Left colon (tissue), 2 donors: ENCODE measurements at regions of chr1 and their contacts with region 1.

Region 1: GRCh38 chr1:56831871-56832693 is 12.9 kb upstream of the FYB2 start:
- DNase-seq: peak in 1 of 2 donors; percentile 46
- ATAC-seq: peak; percentile 71

Region 2: DNA sequence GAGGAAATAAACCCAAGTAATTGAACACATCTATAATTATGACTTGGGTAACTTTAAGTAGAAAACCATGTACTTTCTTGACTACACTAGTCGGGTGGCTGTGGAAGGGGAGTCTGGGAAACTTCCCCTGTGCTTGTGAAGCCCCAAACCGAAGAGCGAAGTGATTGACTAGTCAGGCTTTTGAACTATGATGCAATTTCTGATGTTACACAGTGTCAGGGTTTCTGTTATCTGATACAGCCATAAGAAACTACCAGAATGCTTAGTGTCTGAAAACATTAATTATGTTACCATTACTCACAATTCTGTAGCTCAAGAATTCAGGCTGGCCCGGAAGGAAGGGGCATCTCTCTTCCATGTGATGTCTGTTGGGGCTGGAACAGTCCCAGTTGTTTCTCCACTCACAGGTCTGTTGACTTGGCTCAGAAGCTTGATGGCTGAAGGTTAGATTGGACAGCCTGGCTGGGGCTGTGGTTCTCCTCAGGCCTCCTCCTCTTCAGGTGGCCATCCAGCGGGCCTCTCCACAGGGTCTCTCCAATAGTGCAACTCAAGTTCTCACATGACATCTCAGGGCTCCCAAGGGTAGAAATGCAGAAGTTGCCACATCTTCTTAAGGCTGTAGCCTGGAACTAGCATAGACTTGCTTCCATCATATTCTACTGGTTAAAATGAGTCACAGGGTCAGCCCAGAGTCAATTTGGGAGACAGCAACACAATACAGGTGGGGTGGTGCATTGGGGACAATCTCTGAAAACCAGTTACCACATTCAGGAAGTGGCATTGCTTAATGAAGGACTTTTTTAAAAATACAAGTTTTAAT is 142.1 kb after region 1 on chr1:
- intact Hi-C with region 1: no loop called
- DNase-seq: no peak
- ATAC-seq: no peak

Region 3: DNA sequence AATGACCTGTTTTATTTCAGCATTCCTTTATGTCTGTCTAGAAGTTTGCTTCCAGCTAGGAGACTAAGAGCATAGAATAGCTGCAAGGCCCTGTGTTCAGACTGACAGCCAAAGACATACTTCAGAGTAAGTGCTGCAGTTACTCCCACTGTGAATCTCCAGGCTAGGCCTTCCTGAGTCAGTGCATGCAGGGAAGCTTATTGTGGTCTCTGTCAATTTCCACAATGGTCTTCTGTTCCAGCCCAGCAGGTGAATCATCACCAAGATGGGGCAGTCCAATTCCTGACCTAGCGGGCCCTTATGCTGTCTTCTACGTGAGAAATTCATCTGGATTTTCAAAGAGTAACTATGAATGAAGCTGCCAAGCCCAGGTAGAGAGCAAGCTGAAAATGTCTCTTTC is 280.1 kb after region 1 on chr1:
- intact Hi-C with region 1: no loop called
- DNase-seq: no peak
- ATAC-seq: no peak

Region 4: GRCh38 chr1:57494530-57495079 is 662.5 kb after region 1 on chr1:
- intact Hi-C with region 1: no loop called
- DNase-seq: no peak
- ATAC-seq: no peak

Region 5: DNA sequence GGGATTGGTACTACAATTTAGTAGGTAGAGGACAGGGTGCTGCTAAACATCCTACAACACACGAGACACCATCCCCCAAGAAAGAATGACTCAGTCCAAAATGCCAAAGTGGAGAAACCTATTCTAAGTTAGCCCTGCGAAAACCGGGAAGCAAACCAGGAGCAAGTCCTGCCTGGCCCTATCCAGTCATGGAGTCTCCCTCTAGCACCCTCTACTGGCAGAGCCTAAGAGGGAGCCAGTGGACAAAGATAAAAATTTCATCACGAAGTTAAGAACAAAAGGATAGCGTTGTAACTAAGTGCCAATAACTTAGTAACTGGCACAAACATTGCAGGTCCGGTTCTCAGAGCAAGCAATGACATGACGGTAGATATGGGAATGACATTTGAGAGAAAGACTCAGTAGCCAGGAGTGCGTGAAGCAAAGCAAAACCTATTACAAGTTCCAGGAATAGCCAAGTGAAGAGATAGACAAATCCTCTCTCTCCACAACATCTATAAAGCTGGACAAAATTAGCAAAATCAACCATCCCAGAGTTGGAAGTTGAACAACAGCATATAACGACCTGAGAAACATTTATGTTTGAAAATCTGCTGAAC is 1331.0 kb after region 1 on chr1:
- intact Hi-C with region 1: loop called (anchors 5 to 10 kb)
- DNase-seq: peak; percentile 28 to 35
- ATAC-seq: peak; percentile 71